CD4-positive, alpha-beta memory T cell (primary cell): ENCODE measurements at regions of chr4 and their contacts with region 1.

Region 1: GRCh38 chr4:184538023-184538599 is 63.8 kb upstream of the IRF2 start:
- DNase-seq: peak; percentile 59 to 71 (median 65)
- H3K4me3 ChIP-seq: peak overlapping the region; percentile 82 to 92
- H3K4me3 Mint-ChIP-seq: peak overlapping the region; percentile 91 to 98 (median 94)
- H3K27ac ChIP-seq: peak overlapping the region; percentile 98
- H3K27ac Mint-ChIP-seq: peak overlapping the region; percentile 94 to 100 (median 99)
- H3K4me1 ChIP-seq: peaks cover 37% of the 10 kb centered on the region
- H3K4me1 Mint-ChIP-seq: peaks cover 28 to 51% (median 35%) of the 10 kb centered on the region in 4 donors
- H3K27me3 ChIP-seq: no peaks in the 10 kb centered on the region
- H3K27me3 Mint-ChIP-seq: no peaks in the 10 kb centered on the region

Region 2: DNA sequence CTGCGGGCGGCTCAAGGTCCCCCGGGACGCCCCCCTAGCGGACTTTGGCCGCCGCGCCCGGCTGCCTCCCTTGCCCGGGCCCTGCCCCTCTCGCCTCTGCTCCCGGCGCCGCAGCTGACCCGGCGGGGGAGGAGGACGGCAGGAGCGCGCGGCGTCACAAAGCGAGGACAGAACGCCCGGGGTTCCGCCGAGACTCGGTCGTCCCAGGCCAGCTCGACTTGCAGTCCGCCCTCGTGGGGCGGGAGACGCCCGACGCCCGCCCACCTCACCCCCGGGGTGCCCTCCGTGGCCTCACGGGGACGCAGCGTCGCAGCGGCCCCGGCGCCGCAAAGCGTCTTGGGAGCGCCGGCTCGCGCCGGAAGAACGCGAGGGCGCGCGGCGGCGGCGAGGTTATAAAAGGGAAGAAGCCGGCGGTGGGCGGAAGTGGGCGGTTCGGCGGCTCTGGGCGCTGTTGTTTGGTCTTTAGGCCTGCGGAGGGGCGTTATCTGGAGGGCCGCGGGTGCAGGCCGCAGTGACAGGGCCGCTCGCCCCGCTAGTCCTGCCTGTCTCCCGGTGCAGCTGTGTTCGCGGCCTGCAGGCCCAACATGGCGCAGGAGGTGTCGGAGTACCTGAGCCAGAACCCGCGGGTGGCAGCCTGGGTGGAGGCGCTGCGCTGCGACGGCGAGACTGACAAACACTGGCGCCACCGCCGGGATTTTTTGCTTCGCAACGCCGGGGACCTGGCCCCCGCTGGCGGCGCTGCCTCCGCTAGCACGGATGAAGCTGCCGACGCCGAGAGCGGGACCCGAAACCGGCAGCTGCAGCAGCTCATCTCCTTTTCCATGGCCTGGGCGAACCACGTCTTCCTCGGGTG is 1093.7 kb before region 1 on chr4 and contains the start of gene CDKN2AIP:
- CTCF ChIA-PET with region 1: no interaction called
- POLR2A ChIA-PET with region 1: interaction called, 7 read pairs
- intact Hi-C with region 1: loop called (anchors 10 kb)
- DNase-seq: peak; percentile 93 to 96 (median 96)
- H3K4me3 ChIP-seq: peak within 1 kb of the TSS; percentile 77 to 85
- H3K4me3 Mint-ChIP-seq: peak within 1 kb of the TSS; percentile 92 to 99 (median 98)
- H3K27ac ChIP-seq: peak within 1 kb of the TSS; percentile 96
- H3K27ac Mint-ChIP-seq: peak within 1 kb of the TSS; percentile 96 to 99 (median 98)
- H3K4me1 ChIP-seq: peaks cover 52% of the 10 kb centered on the region
- H3K4me1 Mint-ChIP-seq: peaks cover 32 to 63% (median 43%) of the 10 kb centered on the region in 4 donors
- H3K27me3 ChIP-seq: no peaks in the 10 kb centered on the region
- H3K27me3 Mint-ChIP-seq: no peaks in the 10 kb centered on the region
- total RNA-seq, gene CDKN2AIP: 48.3 to 51.1 TPM

Region 3: GRCh38 chr4:184343502-184344177 is 194.5 kb before region 1 on chr4:
- CTCF ChIA-PET with region 1: no interaction called
- POLR2A ChIA-PET with region 1: no interaction called
- intact Hi-C with region 1: no loop called
- DNase-seq: peak; percentile 26 to 50 (median 35)
- H3K4me3 ChIP-seq: peak overlapping the region; percentile 50 to 54
- H3K4me3 Mint-ChIP-seq: peak overlapping the region; percentile 85 to 92 (median 88)
- H3K27ac ChIP-seq: no peak overlapping the region
- H3K27ac Mint-ChIP-seq: peak overlapping the region; percentile 13 to 87 (median 72)
- H3K4me1 ChIP-seq: peaks cover 13% of the 10 kb centered on the region
- H3K4me1 Mint-ChIP-seq: peaks cover 9 to 18% (median 12%) of the 10 kb centered on the region in 4 donors
- H3K27me3 ChIP-seq: no peaks in the 10 kb centered on the region
- H3K27me3 Mint-ChIP-seq: no peaks in the 10 kb centered on the region

Region 4: GRCh38 chr4:184417802-184418511 is 120.2 kb before region 1 on chr4:
- CTCF ChIA-PET with region 1: interaction called, 3 read pairs
- POLR2A ChIA-PET with region 1: interaction called, 13 read pairs
- intact Hi-C with region 1: loop called (anchors 2 kb)
- DNase-seq: peak in 3 of 5 donors; percentile 18 to 62 (median 28)
- H3K4me3 ChIP-seq: peak overlapping the region in 1 of 2 donors; percentile 63
- H3K4me3 Mint-ChIP-seq: peak overlapping the region; percentile 22 to 89 (median 82)
- H3K27ac ChIP-seq: peak overlapping the region; percentile 81
- H3K27ac Mint-ChIP-seq: peak overlapping the region; percentile 94 to 99 (median 98)
- H3K4me1 ChIP-seq: peaks cover 79% of the 10 kb centered on the region
- H3K4me1 Mint-ChIP-seq: peaks cover 55 to 83% (median 69%) of the 10 kb centered on the region in 4 donors
- H3K27me3 ChIP-seq: no peaks in the 10 kb centered on the region
- H3K27me3 Mint-ChIP-seq: no peaks in the 10 kb centered on the region

Region 5: DNA sequence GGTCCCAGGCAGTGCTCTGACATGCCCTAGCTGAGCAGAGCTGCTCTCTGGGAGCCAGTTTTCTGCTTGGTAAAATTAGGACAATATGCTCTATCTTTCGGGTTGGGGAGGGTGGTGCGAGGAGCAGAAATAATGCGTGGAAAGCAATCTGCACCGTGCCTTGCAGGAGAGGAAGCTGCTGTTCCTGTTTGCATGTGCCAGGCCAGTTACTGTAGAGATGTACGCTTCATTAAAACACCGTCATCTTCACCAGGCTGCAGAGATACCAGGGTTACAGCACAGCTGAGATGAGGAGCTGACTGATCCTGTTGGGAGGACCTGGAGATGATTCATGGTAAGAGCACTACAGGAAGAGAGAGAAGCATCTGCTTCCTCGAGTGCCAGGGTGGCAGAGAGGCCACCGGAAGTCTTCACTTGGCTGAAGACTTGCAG is 34.2 kb before region 1 on chr4:
- CTCF ChIA-PET with region 1: interaction called, 7 read pairs
- POLR2A ChIA-PET with region 1: interaction called, 14 read pairs
- intact Hi-C with region 1: no loop called
- DNase-seq: peak in 4 of 5 donors; percentile 17 to 32 (median 25)
- H3K4me3 ChIP-seq: no peak overlapping the region
- H3K4me3 Mint-ChIP-seq: peak overlapping the region in 7 of 8 donors; percentile 48 to 81 (median 69)
- H3K27ac ChIP-seq: peak overlapping the region; percentile 28
- H3K27ac Mint-ChIP-seq: peak overlapping the region; percentile 8 to 88 (median 65)
- H3K4me1 ChIP-seq: peaks cover 20% of the 10 kb centered on the region
- H3K4me1 Mint-ChIP-seq: peaks cover 13 to 34% (median 19%) of the 10 kb centered on the region in 4 donors
- H3K27me3 ChIP-seq: no peaks in the 10 kb centered on the region
- H3K27me3 Mint-ChIP-seq: no peaks in the 10 kb centered on the region

Region 6: GRCh38 chr4:184733654-184734524 is 195.8 kb after region 1 on chr4 and contains the start of gene CENPU:
- CTCF ChIA-PET with region 1: no interaction called
- POLR2A ChIA-PET with region 1: interaction called, 12 read pairs
- intact Hi-C with region 1: loop called (anchors 1 kb)
- DNase-seq: peak; percentile 93 to 95 (median 94)
- H3K4me3 ChIP-seq: peak within 1 kb of the TSS; percentile 59 to 81
- H3K4me3 Mint-ChIP-seq: peak within 1 kb of the TSS; percentile 88 to 96 (median 92)
- H3K27ac ChIP-seq: peak within 1 kb of the TSS; percentile 56
- H3K27ac Mint-ChIP-seq: peak within 1 kb of the TSS; percentile 86 to 95 (median 92)
- H3K4me1 ChIP-seq: peaks cover 15% of the 10 kb centered on the region
- H3K4me1 Mint-ChIP-seq: peaks cover 8 to 23% (median 14%) of the 10 kb centered on the region in 4 donors
- H3K27me3 ChIP-seq: no peaks in the 10 kb centered on the region
- H3K27me3 Mint-ChIP-seq: no peaks in the 10 kb centered on the region
- total RNA-seq, gene CENPU: 2.1 to 2.2 TPM

Region 7: GRCh38 chr4:185203486-185204237 is 665.6 kb after region 1 on chr4 and contains the start of gene CFAP97:
- CTCF ChIA-PET with region 1: no interaction called
- POLR2A ChIA-PET with region 1: no interaction called
- intact Hi-C with region 1: loop called (anchors 5 kb)
- DNase-seq: peak; percentile 88 to 90 (median 90)
- H3K4me3 ChIP-seq: peak within 1 kb of the TSS; percentile 47 to 83
- H3K4me3 Mint-ChIP-seq: peak within 1 kb of the TSS; percentile 91 to 99 (median 96)
- H3K27ac ChIP-seq: peak within 1 kb of the TSS; percentile 82
- H3K27ac Mint-ChIP-seq: peak within 1 kb of the TSS; percentile 98 to 99 (median 99)
- H3K4me1 ChIP-seq: peaks cover 48% of the 10 kb centered on the region
- H3K4me1 Mint-ChIP-seq: peaks cover 31 to 66% (median 48%) of the 10 kb centered on the region in 4 donors
- H3K27me3 ChIP-seq: no peaks in the 10 kb centered on the region
- H3K27me3 Mint-ChIP-seq: no peaks in the 10 kb centered on the region
- total RNA-seq, gene CFAP97: 41.6 to 41.9 TPM